GM23248 (cell line): ENCODE measurements at regions of chr18 and their contacts with region 1.

Region 1: DNA sequence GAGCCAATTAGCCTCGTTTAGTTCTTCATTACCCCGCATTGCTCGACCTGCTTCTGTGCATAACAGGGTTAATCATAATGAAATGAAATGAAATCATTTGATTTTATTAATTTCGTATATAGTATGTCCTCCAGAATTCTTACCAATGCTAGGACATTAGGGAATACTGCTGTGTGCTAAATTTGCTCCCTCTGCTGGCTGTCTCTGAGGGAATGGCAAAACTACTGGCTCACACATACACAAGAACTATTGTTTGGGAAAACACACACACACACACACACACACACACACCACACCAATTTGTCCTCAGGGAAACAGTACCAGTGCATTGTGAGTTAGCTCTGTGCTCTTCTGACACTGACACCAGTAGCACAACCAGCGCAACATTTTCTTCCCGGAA is 273.3 kb upstream of the TCF4 start:
- DNase-seq: peak; percentile 68
- H3K4me3 ChIP-seq: no peak overlapping the region
- H3K27ac ChIP-seq: no peak overlapping the region
- H3K4me1 ChIP-seq: peaks cover 43% of the 10 kb centered on the region
- H3K27me3 ChIP-seq: no peaks in the 10 kb centered on the region

Region 2: DNA sequence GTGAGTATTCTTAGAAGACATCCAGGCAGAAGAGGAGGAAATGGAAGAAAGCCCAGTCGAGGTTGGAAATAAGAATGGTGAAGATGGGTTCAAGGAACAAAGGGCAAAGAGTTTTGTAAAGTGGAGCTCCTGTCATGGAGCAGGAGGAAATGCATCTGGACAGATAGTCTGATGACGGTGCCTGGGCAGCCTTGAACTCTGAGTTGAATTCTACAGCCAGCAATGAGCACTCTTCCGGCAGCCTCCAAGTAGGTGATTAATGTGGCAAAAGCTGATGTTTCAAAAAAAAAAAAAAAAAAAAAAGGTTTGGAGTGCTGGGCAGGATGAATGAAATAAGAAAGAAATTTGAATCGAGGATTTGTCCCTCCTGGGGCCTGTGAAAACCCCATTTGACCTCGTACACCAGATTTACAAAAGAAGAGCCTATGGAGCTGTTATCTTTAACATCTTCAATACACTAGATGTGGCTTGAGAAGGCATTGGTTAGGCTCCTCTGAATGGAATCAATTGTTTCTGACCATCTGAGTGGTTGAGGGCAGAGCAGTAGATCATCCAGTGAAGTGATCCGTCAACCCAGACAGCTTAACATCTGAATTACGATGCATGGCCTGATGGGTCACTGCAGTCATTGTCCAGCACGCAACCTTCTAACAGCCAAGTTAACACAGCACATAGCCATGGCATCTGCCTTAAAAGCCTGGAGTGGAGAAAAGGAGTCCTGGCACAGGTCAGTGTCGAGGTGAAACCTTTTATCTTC is 327.4 kb after region 1 on chr18:
- in situ Hi-C with region 1: no loop called
- DNase-seq: no peak
- H3K4me3 ChIP-seq: no peak overlapping the region
- H3K27ac ChIP-seq: no peak overlapping the region
- H3K4me1 ChIP-seq: no peaks in the 10 kb centered on the region
- H3K27me3 ChIP-seq: no peaks in the 10 kb centered on the region

Region 3: DNA sequence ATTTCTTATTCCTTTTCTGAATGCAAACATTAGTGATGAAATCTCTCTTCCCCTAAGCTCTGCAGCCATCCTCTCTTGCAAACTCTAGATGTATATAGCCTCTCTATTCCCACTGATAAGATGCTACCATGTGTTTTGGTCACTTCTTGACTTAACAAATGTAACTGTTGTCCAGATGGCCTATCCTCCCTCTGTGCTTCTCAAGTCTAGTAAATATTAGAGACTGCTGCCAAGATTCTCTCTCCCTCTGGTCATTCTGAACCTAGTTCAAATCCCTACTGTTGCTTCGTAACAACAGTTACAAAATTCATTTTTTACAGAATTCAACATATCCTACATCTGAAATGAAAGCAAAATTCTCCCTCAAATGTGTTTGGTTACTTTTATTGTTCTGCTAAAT is 620.5 kb after region 1 on chr18:
- in situ Hi-C with region 1: no loop called
- DNase-seq: no peak
- H3K4me3 ChIP-seq: no peak overlapping the region
- H3K27ac ChIP-seq: no peak overlapping the region
- H3K4me1 ChIP-seq: no peaks in the 10 kb centered on the region
- H3K27me3 ChIP-seq: no peaks in the 10 kb centered on the region; the same call in 1 of the 2 replicates

Region 4: GRCh38 chr18:56563568-56563967 is 702.3 kb after region 1 on chr18:
- in situ Hi-C with region 1: loop called (anchors 25 kb)
- DNase-seq: no peak
- H3K4me3 ChIP-seq: no peak overlapping the region
- H3K27ac ChIP-seq: no peak overlapping the region
- H3K4me1 ChIP-seq: peaks cover 16% of the 10 kb centered on the region
- H3K27me3 ChIP-seq: peaks cover 5% of the 10 kb centered on the region; the same call in 1 of the 2 replicates